Activated CD8-positive, alpha-beta T cell treated with anti-CD3 and anti-CD28 coated beads, Interleukin-2, amount 10 ng/mL, durations not matched to agents 7 days and 5 days (primary cell): ENCODE measurements at regions of chr1 and their contacts with region 1.

Region 1: DNA sequence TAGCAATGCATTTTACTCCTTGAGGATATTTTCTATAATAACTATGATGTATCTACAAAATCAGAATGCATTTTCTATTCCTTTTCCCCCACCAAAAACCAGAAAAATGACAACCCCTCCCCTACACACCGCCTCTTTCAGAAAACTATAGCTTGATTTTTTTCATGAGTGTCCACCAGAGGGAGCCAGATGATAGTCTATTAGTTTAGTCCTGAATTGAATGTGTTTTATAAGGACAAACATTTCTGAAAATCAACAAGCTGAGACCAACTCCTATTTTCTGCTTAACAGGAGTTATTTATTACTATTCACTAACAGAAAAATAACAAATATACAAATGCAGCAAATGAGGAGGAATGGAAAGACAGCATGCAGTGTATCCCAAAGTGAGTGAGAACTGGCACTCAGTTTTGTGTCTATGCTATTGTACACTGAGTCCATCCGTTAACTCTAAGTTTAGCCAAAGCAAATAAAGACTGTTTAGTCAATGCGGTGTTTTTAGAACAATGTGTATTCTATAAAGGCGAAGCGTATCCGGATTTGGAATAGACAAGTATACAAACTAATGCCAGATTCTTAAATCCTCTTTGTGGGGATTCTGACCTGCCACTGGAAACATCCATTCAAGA is 182.6 kb downstream of the VAV3 start:
- DNase-seq: peak; percentile 69
- ATAC-seq: no peak
- H3K4me3 Mint-ChIP-seq: no peak overlapping the region
- H3K27ac Mint-ChIP-seq: no peak overlapping the region
- H3K4me1 Mint-ChIP-seq: peaks cover 26% of the 10 kb centered on the region
- H3K27me3 Mint-ChIP-seq: no peaks in the 10 kb centered on the region

Region 2: GRCh38 chr1:107795994-107796393 is 13.7 kb after region 1 on chr1:
- CTCF ChIA-PET with region 1: interaction called, 14 read pairs
- POLR2A ChIA-PET with region 1: no interaction called
- DNase-seq: no peak
- ATAC-seq: no peak
- H3K4me3 Mint-ChIP-seq: no peak overlapping the region
- H3K27ac Mint-ChIP-seq: no peak overlapping the region
- H3K4me1 Mint-ChIP-seq: peaks cover 12% of the 10 kb centered on the region
- H3K27me3 Mint-ChIP-seq: no peaks in the 10 kb centered on the region

Region 3: DNA sequence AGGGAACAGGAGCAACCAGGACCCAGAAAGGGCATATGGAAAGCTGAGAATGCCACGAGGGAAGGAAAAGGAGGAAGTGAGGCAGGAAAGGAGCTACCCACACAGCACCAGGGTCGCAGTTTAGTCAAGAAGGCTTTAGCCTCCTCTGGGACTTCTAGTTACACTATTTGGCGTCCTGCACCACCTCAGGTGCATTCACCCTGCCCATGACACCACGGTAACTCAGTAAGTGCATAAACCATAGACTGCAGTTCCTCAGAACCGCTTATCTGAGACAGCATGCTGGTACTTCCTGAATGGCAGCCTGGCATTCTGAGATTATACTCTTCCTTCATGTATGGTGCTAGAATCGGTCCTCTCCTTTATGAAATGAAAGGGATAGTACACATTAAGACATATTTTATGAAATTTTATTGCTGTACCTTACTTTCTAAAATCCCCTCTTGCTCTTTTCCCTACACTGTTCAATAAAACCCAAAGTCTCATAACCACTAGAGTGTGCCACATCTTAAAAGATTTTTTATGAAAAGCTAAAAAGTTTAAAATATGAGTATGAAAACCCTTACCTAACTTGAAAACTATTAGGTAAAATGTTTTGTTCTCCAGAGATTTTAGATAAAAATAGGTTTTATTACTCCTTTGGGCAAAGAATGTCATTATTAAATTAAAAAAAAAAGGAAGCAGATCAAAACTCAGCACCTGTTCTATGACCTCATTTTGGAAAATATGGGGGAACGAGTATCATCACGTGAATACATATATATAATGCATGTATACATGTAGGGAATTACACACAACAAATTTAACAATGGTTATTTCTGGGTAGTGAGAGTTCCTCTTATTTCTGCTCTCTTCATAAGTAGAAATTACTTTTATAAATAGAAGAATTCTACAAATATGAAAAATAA is 115.4 kb after region 1 on chr1:
- CTCF ChIA-PET with region 1: interaction called, 11 read pairs
- POLR2A ChIA-PET with region 1: no interaction called
- DNase-seq: no peak
- ATAC-seq: peak; percentile 48
- H3K4me3 Mint-ChIP-seq: no peak overlapping the region
- H3K27ac Mint-ChIP-seq: peak overlapping the region; percentile 22
- H3K4me1 Mint-ChIP-seq: peaks cover 44% of the 10 kb centered on the region
- H3K27me3 Mint-ChIP-seq: no peaks in the 10 kb centered on the region

Region 4: DNA sequence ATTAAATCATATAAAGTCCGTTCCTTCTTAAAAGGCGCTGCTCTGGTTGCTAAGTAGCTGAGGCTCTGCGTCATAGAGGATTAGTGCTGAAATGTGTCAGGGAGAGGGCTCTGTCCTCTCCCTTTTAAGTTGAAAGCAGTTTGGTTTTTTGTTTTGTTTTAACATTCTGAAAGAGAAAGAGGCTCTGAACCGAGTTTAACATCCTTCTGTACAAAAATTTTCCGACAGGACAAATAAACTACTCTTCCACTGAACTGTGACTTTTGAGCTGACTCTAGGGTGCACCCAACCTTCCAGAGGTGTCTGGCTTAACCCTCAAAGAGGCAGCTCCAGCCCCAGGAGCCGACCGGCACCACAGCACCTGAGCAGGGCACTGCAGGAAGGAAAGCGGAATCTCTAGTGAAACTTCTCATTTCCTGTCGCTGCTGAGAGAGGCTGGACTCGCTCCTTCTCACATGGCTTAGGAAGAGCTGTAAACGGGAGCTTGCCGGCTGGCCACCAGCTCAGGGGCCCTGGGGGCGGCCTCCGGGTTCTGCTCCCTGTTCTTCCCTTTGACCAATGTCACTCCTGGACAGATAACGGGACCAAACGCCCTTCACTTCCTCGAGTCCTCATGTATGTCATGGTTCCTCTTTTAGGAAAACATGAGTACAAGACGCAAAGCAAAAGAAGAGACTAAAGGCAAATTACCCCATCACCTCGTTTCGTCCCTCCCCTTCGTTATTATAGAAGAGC is 181.4 kb after region 1 on chr1:
- CTCF ChIA-PET with region 1: interaction called, 55 read pairs
- POLR2A ChIA-PET with region 1: interaction called, 11 read pairs
- DNase-seq: peak; percentile 58
- ATAC-seq: peak; percentile 61
- H3K4me3 Mint-ChIP-seq: peak overlapping the region; percentile 86
- H3K27ac Mint-ChIP-seq: peak overlapping the region; percentile 91
- H3K4me1 Mint-ChIP-seq: peaks cover 25% of the 10 kb centered on the region
- H3K27me3 Mint-ChIP-seq: peaks cover 3% of the 10 kb centered on the region

Region 5: GRCh38 chr1:108049178-108049819 is 267.0 kb after region 1 on chr1:
- CTCF ChIA-PET with region 1: interaction called, 12 read pairs
- POLR2A ChIA-PET with region 1: no interaction called
- DNase-seq: peak; percentile 33
- ATAC-seq: peak; percentile 40
- H3K4me3 Mint-ChIP-seq: no peak overlapping the region
- H3K27ac Mint-ChIP-seq: no peak overlapping the region
- H3K4me1 Mint-ChIP-seq: peaks cover 9% of the 10 kb centered on the region
- H3K27me3 Mint-ChIP-seq: peaks cover 4% of the 10 kb centered on the region

Region 6: GRCh38 chr1:108118018-108118902 is 335.9 kb after region 1 on chr1:
- CTCF ChIA-PET with region 1: interaction called, 319 read pairs
- POLR2A ChIA-PET with region 1: interaction called, 3 read pairs
- DNase-seq: no peak
- ATAC-seq: no peak
- H3K4me3 Mint-ChIP-seq: no peak overlapping the region
- H3K27ac Mint-ChIP-seq: no peak overlapping the region
- H3K4me1 Mint-ChIP-seq: peaks cover 6% of the 10 kb centered on the region
- H3K27me3 Mint-ChIP-seq: peaks cover 12% of the 10 kb centered on the region

Region 7: DNA sequence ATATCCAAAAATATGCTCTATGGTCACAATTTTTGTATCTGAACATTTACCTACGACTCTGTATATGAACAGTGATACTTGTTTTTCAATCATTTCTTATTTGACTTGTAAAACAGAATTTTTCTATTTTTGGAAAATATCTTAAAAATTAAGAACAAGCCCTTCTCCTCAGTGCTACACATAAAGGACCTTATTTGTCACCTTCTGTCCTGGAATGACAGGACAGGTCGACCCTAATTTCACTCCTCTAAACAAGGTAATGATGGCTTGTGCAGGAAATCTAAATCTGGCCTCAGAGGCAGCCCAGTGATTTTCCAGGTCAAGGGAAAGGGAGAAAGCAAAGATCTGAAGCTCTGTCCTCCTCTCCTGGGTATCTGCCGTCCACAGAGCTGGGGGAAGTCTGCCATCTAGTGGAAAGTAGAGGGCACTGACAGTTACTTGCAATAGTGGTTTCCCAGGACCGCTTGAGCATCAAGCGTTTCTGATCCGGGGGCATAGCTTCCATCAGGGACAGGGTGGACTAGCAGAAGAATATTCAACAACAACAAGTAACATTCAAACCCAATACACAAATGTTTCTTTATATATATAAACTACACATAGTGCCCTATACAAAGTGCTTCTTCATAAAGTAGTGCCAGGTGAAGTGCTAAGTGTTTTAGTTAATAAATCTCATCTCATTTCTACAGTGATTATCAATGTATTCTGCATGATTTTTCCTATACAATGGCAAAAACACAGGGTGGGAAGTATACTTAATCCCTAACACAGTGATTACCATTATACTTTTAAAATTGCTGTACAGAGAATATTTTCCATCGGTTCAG is 343.2 kb after region 1 on chr1:
- CTCF ChIA-PET with region 1: interaction called, 319 read pairs
- POLR2A ChIA-PET with region 1: interaction called, 8 read pairs
- DNase-seq: peak; percentile 78
- ATAC-seq: peak; percentile 92
- H3K4me3 Mint-ChIP-seq: no peak overlapping the region
- H3K27ac Mint-ChIP-seq: no peak overlapping the region
- H3K4me1 Mint-ChIP-seq: peaks cover 2% of the 10 kb centered on the region
- H3K27me3 Mint-ChIP-seq: no peaks in the 10 kb centered on the region